Activated naive CD8-positive, alpha-beta T cell treated with anti-CD3 and anti-CD28 coated beads, Interleukin-2, amount 10 ng/mL, durations not matched to agents 7 days and 5 days (primary cell): ENCODE measurements at regions of chr1 and their contacts with region 1.

Region 1: DNA sequence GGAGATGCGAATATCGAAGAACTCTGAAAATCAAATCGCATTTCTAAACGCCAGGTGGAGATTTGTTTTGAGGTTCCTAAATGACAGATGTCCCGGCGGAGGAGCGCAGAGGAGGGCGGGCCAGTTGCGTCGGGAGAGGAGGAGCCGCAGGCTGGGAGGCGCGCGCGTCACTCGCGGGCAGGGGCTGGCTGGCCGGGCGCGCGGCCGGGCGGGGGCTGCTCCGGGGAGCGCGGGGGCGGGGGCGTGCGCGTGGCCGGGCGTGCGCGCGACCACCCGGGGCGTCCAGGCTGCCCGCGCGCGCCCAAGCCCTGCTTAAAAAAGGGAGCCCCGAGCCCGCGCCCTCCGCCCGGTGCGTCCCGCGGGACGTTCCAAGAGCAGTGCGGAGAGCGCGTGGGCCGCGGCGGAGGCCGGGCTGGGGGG is 47.3 kb downstream of the H3-3A start:
- DNase-seq: peak; percentile 86
- ATAC-seq: peak; percentile 82
- H3K4me3 Mint-ChIP-seq: peak overlapping the region; percentile 88
- H3K27ac Mint-ChIP-seq: peak overlapping the region; percentile 89
- H3K4me1 Mint-ChIP-seq: peaks cover 8% of the 10 kb centered on the region
- H3K27me3 Mint-ChIP-seq: peaks cover 3% of the 10 kb centered on the region

Region 2: GRCh38 chr1:226083302-226084101 is 26.3 kb before region 1 on chr1:
- POLR2A ChIA-PET with region 1: interaction called, 12 read pairs
- DNase-seq: peak; percentile 98
- ATAC-seq: peak; percentile 93
- H3K4me3 Mint-ChIP-seq: peak overlapping the region; percentile 94
- H3K27ac Mint-ChIP-seq: peak overlapping the region; percentile 92
- H3K4me1 Mint-ChIP-seq: peaks cover 5% of the 10 kb centered on the region
- H3K27me3 Mint-ChIP-seq: peaks cover 8% of the 10 kb centered on the region

Region 3: GRCh38 chr1:226121587-226122400 is 12.0 kb after region 1 on chr1:
- POLR2A ChIA-PET with region 1: interaction called, 34 read pairs
- DNase-seq: peak; percentile 91
- ATAC-seq: peak; percentile 79
- H3K4me3 Mint-ChIP-seq: peak overlapping the region; percentile 62
- H3K27ac Mint-ChIP-seq: peak overlapping the region; percentile 64
- H3K4me1 Mint-ChIP-seq: peaks cover 15% of the 10 kb centered on the region
- H3K27me3 Mint-ChIP-seq: peaks cover 9% of the 10 kb centered on the region